Activated CD4-positive, alpha-beta memory T cell treated with anti-CD3 and anti-CD28 coated beads for 36 hours (primary cell): ENCODE measurements at regions of chr13 and their contacts with region 1.

Region 1: DNA sequence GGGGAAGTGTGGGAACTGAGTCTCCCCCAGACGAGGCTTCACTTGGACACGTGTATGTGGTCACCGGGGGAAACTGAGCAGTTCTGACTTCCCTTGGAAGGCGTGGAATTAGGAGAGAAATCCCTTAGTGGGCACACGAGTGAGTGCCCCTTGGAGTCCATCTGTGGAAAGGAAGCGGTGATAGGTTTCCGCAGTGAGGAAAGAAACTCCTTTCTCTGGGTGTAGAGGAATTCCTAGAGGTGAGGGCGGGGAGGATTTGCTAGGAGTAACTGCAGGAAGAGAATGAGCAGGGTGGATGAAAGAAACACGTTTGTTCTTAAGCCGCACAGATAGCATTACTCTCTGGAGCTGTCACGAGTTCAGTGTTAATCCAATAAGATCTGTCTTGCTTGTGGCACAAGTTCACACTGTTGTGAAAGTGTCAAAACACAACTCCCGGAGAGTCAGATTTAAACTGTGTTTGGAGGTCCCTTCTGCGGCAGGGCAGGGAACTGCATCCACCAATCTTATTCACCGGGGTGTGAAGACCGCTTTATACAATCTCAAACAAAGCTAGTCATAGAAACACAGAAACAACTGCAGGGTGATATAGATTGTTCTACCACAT is 1.2 kb downstream of the KL start:
- DNase-seq: peak; percentile 76
- H3K4me3 Mint-ChIP-seq: peak overlapping the region; percentile 65
- H3K27ac Mint-ChIP-seq: no peak overlapping the region
- H3K4me1 Mint-ChIP-seq: peaks cover 11% of the 10 kb centered on the region
- H3K27me3 Mint-ChIP-seq: peaks cover 57% of the 10 kb centered on the region

Region 2: GRCh38 chr13:32650705-32651311 is 366.6 kb before region 1 on chr13:
- CTCF ChIA-PET with region 1: interaction called, 4 read pairs
- POLR2A ChIA-PET with region 1: no interaction called
- intact Hi-C with region 1: loop called (anchors 5 kb)
- DNase-seq: peak; percentile 78
- H3K4me3 Mint-ChIP-seq: no peak overlapping the region
- H3K27ac Mint-ChIP-seq: no peak overlapping the region
- H3K4me1 Mint-ChIP-seq: peaks cover 46% of the 10 kb centered on the region
- H3K27me3 Mint-ChIP-seq: no peaks in the 10 kb centered on the region

Region 3: DNA sequence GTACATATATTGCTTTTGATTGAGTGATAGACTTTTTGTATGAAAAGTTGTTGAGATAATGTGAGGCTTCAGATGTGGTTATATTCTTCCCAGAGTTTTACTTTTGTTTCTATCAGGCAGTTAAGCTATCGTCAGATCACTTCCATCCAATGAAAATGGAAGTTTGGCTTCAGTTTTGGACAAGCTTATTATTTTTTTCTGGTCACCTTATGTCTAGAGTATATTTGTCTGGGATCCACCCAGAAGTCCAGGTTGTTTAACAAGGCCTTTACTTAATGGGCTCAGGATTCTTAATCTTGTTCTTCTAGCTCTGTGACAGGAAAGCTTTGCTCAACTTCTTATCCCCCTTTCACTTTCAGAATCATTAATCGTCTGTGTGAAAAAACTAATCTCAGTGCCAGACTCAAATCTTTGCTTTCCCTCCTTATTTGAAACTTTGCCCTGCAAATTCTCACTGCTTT is 280.3 kb before region 1 on chr13:
- CTCF ChIA-PET with region 1: no interaction called
- POLR2A ChIA-PET with region 1: no interaction called
- intact Hi-C with region 1: loop called (anchors 2 kb)
- DNase-seq: no peak
- H3K4me3 Mint-ChIP-seq: peak overlapping the region; percentile 72
- H3K27ac Mint-ChIP-seq: peak overlapping the region; percentile 83
- H3K4me1 Mint-ChIP-seq: peaks cover 35% of the 10 kb centered on the region
- H3K27me3 Mint-ChIP-seq: no peaks in the 10 kb centered on the region

Region 4: GRCh38 chr13:32783067-32783466 is 234.4 kb before region 1 on chr13:
- CTCF ChIA-PET with region 1: no interaction called
- POLR2A ChIA-PET with region 1: no interaction called
- intact Hi-C with region 1: loop called (anchors 10 kb)
- DNase-seq: peak; percentile 29
- H3K4me3 Mint-ChIP-seq: no peak overlapping the region
- H3K27ac Mint-ChIP-seq: no peak overlapping the region
- H3K4me1 Mint-ChIP-seq: peaks cover 15% of the 10 kb centered on the region
- H3K27me3 Mint-ChIP-seq: no peaks in the 10 kb centered on the region

Region 5: GRCh38 chr13:32840989-32841713 is 176.3 kb before region 1 on chr13:
- CTCF ChIA-PET with region 1: no interaction called
- POLR2A ChIA-PET with region 1: no interaction called
- intact Hi-C with region 1: loop called (anchors 10 kb)
- DNase-seq: peak; percentile 31
- H3K4me3 Mint-ChIP-seq: no peak overlapping the region
- H3K27ac Mint-ChIP-seq: no peak overlapping the region
- H3K4me1 Mint-ChIP-seq: no peaks in the 10 kb centered on the region
- H3K27me3 Mint-ChIP-seq: peaks cover 5% of the 10 kb centered on the region

Region 6: GRCh38 chr13:32917504-32917903 is 99.9 kb before region 1 on chr13:
- CTCF ChIA-PET with region 1: no interaction called
- POLR2A ChIA-PET with region 1: no interaction called
- intact Hi-C with region 1: loop called (anchors 5 kb)
- DNase-seq: peak; percentile 13
- H3K4me3 Mint-ChIP-seq: no peak overlapping the region
- H3K27ac Mint-ChIP-seq: no peak overlapping the region
- H3K4me1 Mint-ChIP-seq: peaks cover 13% of the 10 kb centered on the region
- H3K27me3 Mint-ChIP-seq: peaks cover 8% of the 10 kb centered on the region

Region 7: DNA sequence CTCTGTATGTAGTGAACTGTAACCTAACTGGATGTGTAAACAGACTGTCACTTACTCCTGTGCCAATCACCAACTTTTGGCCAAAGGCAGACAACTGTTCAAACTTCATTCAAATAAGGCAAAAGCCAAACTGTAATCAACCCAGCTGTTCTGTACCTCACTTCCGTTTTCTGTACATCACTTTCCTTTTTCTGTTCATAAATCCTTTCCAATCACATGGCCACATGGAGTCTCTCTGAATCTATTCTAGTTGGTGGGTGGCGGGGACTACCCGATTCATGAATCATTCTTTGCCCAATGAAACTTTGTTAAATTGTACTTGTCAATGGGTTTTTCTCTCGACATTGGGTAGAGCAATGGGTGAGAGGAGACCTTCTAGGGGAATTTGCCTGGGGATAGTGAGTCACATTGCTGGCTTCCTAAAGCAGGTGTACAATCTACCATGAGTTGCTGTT is 622.2 kb after region 1 on chr13:
- CTCF ChIA-PET with region 1: no interaction called
- POLR2A ChIA-PET with region 1: no interaction called
- intact Hi-C with region 1: loop called (anchors 5 kb)
- DNase-seq: peak; percentile 82
- H3K4me3 Mint-ChIP-seq: no peak overlapping the region
- H3K27ac Mint-ChIP-seq: peak overlapping the region; percentile 92
- H3K4me1 Mint-ChIP-seq: peaks cover 57% of the 10 kb centered on the region
- H3K27me3 Mint-ChIP-seq: no peaks in the 10 kb centered on the region